Activated T-helper 2 cell treated with anti-CD3 and anti-CD28 coated beads, Interferon-gamma antibody, Interleukin-2, Interleukin-4, amounts not matched to agents 10 μg/mL and 5 μg/mL and 100 μg/mL, durations not matched to agents 14 hours and 24 hours and 36 hours (primary cell): ENCODE measurements at regions of chr6 and their contacts with region 1.

Region 1: DNA sequence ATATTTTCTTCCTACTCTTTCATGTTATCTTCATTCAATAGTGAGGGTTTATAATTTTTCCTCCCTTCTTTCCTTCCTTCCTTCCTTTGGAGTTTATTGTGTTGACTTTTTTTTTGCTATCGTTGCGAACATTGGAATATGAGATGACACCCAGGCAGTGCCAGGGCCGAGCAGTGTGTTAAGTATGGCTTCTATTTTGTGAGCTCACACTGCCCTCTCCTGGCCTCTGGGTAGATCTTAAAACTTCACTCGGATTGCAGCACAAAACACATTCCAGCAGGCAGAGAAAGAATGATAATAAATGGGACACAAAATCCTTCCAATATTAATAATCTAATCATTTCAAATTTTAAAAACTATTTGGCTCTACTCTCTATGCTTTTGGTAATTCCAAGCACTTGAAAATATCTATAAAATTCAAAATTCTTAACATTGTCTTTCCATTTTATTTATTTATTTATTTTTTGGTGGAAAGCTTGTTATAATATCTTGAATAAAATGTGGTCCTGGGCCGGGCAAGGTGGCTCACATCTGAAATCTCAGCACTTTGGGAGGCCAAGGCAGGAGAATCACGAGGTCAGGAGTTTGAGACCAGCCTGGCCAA is 147.4 kb upstream of the OLIG3 start:
- DNase-seq: peak; percentile 50
- H3K4me3 Mint-ChIP-seq: no peak overlapping the region
- H3K27ac Mint-ChIP-seq: no peak overlapping the region
- H3K4me1 Mint-ChIP-seq: peaks cover 17% of the 10 kb centered on the region
- H3K27me3 Mint-ChIP-seq: peaks cover 14% of the 10 kb centered on the region

Region 2: GRCh38 chr6:137076277-137077068 is 565.1 kb before region 1 on chr6:
- intact Hi-C with region 1: loop called (anchors 1 kb)
- DNase-seq: peak; percentile 36
- H3K4me3 Mint-ChIP-seq: no peak overlapping the region
- H3K27ac Mint-ChIP-seq: no peak overlapping the region
- H3K4me1 Mint-ChIP-seq: no peaks in the 10 kb centered on the region
- H3K27me3 Mint-ChIP-seq: peaks cover 52% of the 10 kb centered on the region

Region 3: GRCh38 chr6:137271245-137272183 is 370.1 kb before region 1 on chr6:
- intact Hi-C with region 1: loop called (anchors 2 kb)
- DNase-seq: no peak
- H3K4me3 Mint-ChIP-seq: no peak overlapping the region
- H3K27ac Mint-ChIP-seq: no peak overlapping the region
- H3K4me1 Mint-ChIP-seq: peaks cover 6% of the 10 kb centered on the region
- H3K27me3 Mint-ChIP-seq: peaks cover 33% of the 10 kb centered on the region

Region 4: GRCh38 chr6:137341681-137342195 is 299.8 kb before region 1 on chr6:
- intact Hi-C with region 1: loop called (anchors 5 kb)
- DNase-seq: no peak
- H3K4me3 Mint-ChIP-seq: peak overlapping the region; percentile 28
- H3K27ac Mint-ChIP-seq: no peak overlapping the region
- H3K4me1 Mint-ChIP-seq: peaks cover 18% of the 10 kb centered on the region
- H3K27me3 Mint-ChIP-seq: peaks cover 30% of the 10 kb centered on the region

Region 5: GRCh38 chr6:137497721-137498463 is 143.7 kb before region 1 on chr6:
- intact Hi-C with region 1: loop called (anchors 2 kb)
- DNase-seq: no peak
- H3K4me3 Mint-ChIP-seq: no peak overlapping the region
- H3K27ac Mint-ChIP-seq: no peak overlapping the region
- H3K4me1 Mint-ChIP-seq: peaks cover 28% of the 10 kb centered on the region
- H3K27me3 Mint-ChIP-seq: peaks cover 82% of the 10 kb centered on the region

Region 6: GRCh38 chr6:139109558-139109957 is 1468.0 kb after region 1 on chr6:
- intact Hi-C with region 1: no loop called
- DNase-seq: no peak
- H3K4me3 Mint-ChIP-seq: no peak overlapping the region
- H3K27ac Mint-ChIP-seq: no peak overlapping the region
- H3K4me1 Mint-ChIP-seq: peaks cover 28% of the 10 kb centered on the region
- H3K27me3 Mint-ChIP-seq: no peaks in the 10 kb centered on the region